ENCODE measurements at regions of chr11 and their contacts with region 1.

Region 1: GRCh38 chr11:1390603-1391164 is 950 bp downstream of the BRSK2 start:
- DNase-seq: peak; percentile 63 to 72 (median 70)
- ATAC-seq: peak; percentile 23
- H3K4me3 ChIP-seq: peak overlapping the region in 1 of 2 donors; percentile 34
- H3K27ac ChIP-seq: peak overlapping the region; percentile 41 to 86 (median 84)
- H3K4me1 ChIP-seq: peaks cover 53% of the 10 kb centered on the region
- H3K27me3 ChIP-seq: no peaks in the 10 kb centered on the region
- CTCF ChIP-seq: no peak
- POLR2A ChIP-seq: peak in 1 of 3 donors; percentile 8

Region 2: DNA sequence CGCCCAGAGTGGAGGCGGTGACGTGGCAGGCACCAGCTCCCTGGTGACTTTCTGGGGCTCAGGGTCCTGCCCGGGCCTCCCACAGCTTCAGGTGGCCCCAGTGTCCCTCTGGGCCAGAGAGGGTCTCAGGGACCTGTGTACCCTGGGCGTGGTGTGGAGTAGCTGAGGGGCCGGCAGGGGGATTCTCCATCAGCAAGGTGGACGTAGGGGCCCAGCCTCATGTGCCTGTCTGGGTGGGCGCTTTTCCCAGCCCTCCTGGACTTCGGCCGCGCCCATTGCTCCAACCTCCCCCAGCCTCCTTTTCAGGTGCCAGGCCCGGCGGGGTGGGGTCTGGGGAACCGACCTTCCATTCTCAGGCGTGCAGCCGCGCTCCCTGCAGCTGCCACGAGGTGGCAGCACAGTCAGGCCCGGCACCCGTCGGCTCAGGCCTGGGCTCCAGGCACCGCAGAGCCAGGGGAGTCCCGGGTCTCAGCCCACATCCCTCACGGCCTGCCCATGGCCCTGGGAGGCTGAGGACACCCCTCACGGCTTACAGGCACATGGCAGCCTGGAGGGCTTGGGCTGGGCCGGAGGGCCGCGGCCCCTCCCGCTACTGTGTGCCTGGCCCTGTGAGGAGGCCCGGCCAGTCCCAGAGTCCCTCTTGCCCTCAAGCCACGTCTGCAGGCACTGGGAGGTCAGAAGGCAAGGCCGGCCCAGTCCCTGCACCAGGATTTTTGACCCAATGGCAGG is 187.7 kb before region 1 on chr11:
- intact Hi-C with region 1: loop called (anchors 10 kb)
- DNase-seq: peak; percentile 53 to 75 (median 67)
- ATAC-seq: peak; percentile 80
- H3K4me3 ChIP-seq: no peak overlapping the region
- H3K27ac ChIP-seq: no peak overlapping the region
- H3K4me1 ChIP-seq: peaks cover 6% of the 10 kb centered on the region
- H3K27me3 ChIP-seq: peaks cover 0 to 24% of the 10 kb centered on the region in 2 donors
- CTCF ChIP-seq: peak; percentile 79 to 94 (median 87)
- POLR2A ChIP-seq: no peak

Measured in body of pancreas (tissue), 4 donors.